CD8-positive, alpha-beta T cell (primary cell): ENCODE measurements at regions of chr16 and their contacts with region 1.

Region 1: GRCh38 chr16:28924732-28925385 is at the start of gene RABEP2:
- DNase-seq: peak; percentile 92 to 99 (median 94)
- ATAC-seq: peak; percentile 77
- H3K4me3 ChIP-seq: peak within 1 kb of the TSS; percentile 96 to 97
- H3K4me3 Mint-ChIP-seq: peak within 1 kb of the TSS; percentile 94
- H3K27ac ChIP-seq: peak within 1 kb of the TSS; percentile 98
- H3K27ac Mint-ChIP-seq: peak within 1 kb of the TSS; percentile 97
- H3K4me1 ChIP-seq: peaks cover 10% of the 10 kb centered on the region
- H3K4me1 Mint-ChIP-seq: peaks cover 25% of the 10 kb centered on the region
- H3K27me3 ChIP-seq: no peaks in the 10 kb centered on the region
- H3K27me3 Mint-ChIP-seq: no peaks in the 10 kb centered on the region
- CTCF ChIP-seq: no peak
- total RNA-seq, gene RABEP2: 26.5 to 29.0 TPM

Region 2: DNA sequence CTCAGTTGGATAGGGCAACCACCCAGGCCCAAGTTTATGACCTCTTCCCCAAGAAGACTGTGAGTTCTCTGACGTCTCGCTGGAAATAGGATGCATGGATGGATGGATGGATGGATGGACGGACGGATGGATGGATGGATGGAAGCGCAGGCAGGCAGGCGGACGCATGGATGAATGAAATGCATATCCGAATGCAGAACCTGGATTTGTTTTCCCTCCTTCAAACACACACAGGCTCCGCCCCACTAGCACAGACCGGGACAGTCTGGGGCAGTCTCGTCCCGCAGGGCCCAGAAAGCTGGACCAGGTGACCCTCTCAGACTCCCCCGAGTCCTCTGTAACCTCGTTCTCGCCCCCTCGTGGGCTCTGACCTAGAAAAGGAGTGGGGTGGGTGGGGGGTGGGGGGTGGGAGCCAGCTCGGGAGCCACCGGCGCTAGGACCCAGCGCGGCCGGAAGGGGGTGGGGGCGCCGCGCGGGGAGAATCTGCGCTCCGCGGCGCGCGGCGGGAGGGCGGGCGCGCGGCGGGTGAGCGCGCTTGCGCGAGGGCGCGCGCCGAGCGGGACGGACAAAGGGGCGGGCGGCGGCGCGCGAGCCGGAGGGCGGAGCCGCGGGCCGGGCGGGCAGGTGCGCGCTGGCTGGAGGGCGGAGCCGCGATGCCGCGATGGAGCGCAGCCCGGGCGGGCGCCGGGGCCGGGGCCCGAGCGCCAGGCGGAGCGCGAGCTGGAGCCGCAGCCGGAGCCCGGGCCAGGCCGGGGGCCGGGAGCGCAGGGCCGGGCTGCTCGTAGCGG is 632.8 kb before region 1 on chr16 and contains the start of gene SBK1:
- CTCF ChIA-PET with region 1: no interaction called
- POLR2A ChIA-PET with region 1: no interaction called
- intact Hi-C with region 1: loop called in 1 of 2 experiments (anchors 5 kb)
- DNase-seq: peak; percentile 68 to 94 (median 84)
- ATAC-seq: peak; percentile 90
- H3K4me3 ChIP-seq: peak within 1 kb of the TSS; percentile 82 to 92
- H3K4me3 Mint-ChIP-seq: peak within 1 kb of the TSS; percentile 94
- H3K27ac ChIP-seq: peak within 1 kb of the TSS; percentile 56 to 75
- H3K27ac Mint-ChIP-seq: peak within 1 kb of the TSS; percentile 93
- H3K4me1 ChIP-seq: peaks cover 74% of the 10 kb centered on the region
- H3K4me1 Mint-ChIP-seq: peaks cover 67% of the 10 kb centered on the region
- H3K27me3 ChIP-seq: no peaks in the 10 kb centered on the region
- H3K27me3 Mint-ChIP-seq: no peaks in the 10 kb centered on the region
- CTCF ChIP-seq: no peak
- total RNA-seq, gene SBK1: 16.5 to 17.1 TPM

Region 3: DNA sequence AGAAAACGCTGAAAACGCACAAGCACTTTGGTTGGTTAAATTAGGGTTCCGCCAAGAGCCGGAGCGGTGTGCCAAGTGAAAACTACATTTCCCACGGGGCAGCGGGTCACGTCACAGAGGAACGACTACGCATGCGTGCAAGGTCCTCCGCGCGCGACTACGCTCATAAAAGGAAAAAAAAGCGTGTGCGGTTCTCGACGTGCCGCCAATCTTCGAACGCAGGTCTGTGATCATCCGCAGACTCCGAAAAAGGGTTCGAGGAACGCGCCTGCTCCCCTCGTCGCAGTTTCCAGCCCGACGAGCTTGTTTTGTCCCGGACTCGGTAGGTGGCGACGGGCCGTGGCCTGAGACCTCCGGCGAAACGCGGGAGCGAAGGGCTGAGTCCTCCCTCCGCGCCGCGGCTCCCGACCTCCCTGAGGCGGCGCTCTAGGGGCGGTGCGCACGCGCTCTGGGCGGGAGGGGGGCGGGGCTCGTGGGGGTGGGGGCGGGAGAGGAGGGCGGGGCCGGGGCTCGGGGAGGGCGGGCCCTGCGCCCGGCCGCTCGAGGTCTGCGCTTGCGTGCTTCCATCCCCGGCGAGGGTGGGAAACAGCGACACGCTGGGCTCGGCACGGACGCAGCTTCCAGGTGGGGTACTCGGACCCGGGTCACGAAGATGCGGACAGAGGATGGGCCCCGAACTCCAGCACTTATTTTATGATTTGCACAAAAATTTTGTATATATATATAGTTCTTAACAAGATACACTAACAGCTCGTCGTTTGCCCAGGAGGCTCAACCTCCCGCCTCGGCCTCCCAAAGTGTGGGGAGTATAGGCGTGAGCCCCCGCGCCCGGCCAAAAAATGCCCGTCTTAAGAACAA is 370.9 kb before region 1 on chr16 and contains the start of gene SGF29:
- CTCF ChIA-PET with region 1: no interaction called
- POLR2A ChIA-PET with region 1: no interaction called
- intact Hi-C with region 1: no loop called
- DNase-seq: peak; percentile 86 to 97 (median 93)
- ATAC-seq: peak; percentile 93
- H3K4me3 ChIP-seq: peak within 1 kb of the TSS; percentile 87 to 99
- H3K4me3 Mint-ChIP-seq: peak within 1 kb of the TSS; percentile 92
- H3K27ac ChIP-seq: peak within 1 kb of the TSS; percentile 95 to 98
- H3K27ac Mint-ChIP-seq: peak within 1 kb of the TSS; percentile 98
- H3K4me1 ChIP-seq: peaks cover 18% of the 10 kb centered on the region
- H3K4me1 Mint-ChIP-seq: peaks cover 36% of the 10 kb centered on the region
- H3K27me3 ChIP-seq: no peaks in the 10 kb centered on the region
- H3K27me3 Mint-ChIP-seq: no peaks in the 10 kb centered on the region
- CTCF ChIP-seq: no peak
- total RNA-seq, gene SGF29: 41.1 to 44.5 TPM

Region 4: DNA sequence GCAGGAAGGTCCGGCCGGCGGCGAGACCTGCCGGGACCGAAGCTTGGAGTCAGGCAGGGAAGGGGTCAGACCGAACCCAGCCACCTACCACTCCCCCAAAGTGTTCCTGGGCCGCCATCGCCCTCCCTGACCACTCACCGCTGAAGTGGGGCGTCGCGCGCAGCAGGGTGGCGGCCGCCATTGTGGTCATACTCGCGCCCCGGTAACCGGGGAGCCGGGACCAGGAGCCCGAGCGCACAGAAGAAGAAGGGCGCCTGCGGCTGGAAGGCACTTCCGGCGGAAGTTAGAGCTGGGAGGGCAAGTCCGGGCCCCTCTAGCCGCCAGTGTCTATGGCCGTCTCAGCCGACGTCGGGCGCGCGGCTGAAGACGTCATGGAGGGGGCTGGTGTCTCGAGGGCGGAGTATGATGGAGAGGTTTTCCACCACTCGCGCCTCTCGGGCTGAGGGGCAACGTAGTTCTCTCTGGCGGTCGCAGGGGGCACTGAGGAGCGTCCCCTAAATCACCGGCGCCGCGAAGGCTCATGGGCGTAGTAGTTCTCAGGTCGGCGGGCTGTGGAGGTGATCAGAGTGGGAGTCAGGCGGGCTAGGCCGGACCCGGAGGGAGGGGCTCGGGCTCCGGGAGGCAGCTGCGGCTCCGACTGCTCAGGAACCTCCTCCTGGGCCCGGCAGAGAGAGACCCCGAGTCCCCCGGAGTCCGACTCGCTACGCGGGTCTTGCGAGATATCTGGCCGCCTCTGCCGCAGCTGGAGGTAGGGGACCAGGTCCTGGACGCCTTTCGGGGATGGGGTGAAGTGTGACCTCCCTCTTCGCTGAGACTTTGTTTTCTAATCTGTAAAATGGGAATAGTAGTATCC is 78.6 kb before region 1 on chr16 and contains the start of gene TUFM:
- CTCF ChIA-PET with region 1: interaction called, 3 read pairs
- POLR2A ChIA-PET with region 1: interaction called, 8 read pairs
- intact Hi-C with region 1: loop called (anchors 1 kb)
- DNase-seq: peak; percentile 96 to 99 (median 98)
- ATAC-seq: peak; percentile 96
- H3K4me3 ChIP-seq: peak within 1 kb of the TSS; percentile 83 to 100
- H3K4me3 Mint-ChIP-seq: peak within 1 kb of the TSS; percentile 91
- H3K27ac ChIP-seq: peak within 1 kb of the TSS; percentile 78 to 93
- H3K27ac Mint-ChIP-seq: peak within 1 kb of the TSS; percentile 94
- H3K4me1 ChIP-seq: peaks cover 23% of the 10 kb centered on the region
- H3K4me1 Mint-ChIP-seq: peaks cover 32% of the 10 kb centered on the region
- H3K27me3 ChIP-seq: no peaks in the 10 kb centered on the region
- H3K27me3 Mint-ChIP-seq: no peaks in the 10 kb centered on the region
- CTCF ChIP-seq: peak; percentile 75
- total RNA-seq, gene TUFM: 111 to 119 TPM

Region 5: DNA sequence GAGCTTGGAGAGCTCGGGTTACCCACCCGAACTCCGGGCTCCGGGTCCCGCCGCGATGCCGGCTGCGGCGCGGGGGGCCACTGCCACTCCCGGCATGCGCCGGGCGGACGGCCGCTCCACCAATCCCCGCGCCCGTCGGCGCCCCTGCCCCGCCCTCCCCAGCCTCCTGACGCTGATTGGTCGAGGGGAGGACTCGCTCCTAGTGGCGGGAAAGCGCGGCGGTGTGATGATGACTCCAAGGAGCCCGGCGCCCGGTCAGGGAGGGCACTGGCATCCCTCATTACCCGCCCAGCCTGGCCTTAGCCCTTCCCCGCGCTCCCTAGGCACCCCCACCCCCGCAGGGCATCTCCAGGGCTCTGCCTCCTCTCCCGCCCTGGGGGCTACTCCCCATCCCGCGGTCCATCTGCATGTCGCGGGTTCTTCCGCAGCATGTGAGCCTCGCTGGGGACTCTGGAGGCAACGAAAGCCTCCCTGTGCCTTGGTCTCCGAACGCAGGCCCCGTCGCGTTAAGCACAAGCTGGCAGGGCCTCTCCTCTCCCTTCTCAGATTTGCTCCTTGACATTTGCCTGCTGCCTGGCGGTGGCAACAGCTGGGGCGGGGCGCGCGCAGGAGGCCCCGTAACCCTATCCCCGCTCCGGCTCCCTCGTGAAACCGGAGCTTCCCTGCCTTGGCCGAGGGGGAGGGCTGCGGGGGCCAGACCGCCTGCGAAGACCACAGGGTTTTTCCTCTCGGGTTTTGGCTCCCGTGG is 44.8 kb before region 1 on chr16:
- CTCF ChIA-PET with region 1: no interaction called
- POLR2A ChIA-PET with region 1: interaction called, 3 read pairs
- intact Hi-C with region 1: loop called (anchors 1 to 5 kb)
- DNase-seq: peak; percentile 78 to 91 (median 89)
- ATAC-seq: peak; percentile 97
- H3K4me3 ChIP-seq: peak overlapping the region; percentile 85 to 88
- H3K4me3 Mint-ChIP-seq: peak overlapping the region; percentile 86
- H3K27ac ChIP-seq: peak overlapping the region in 1 of 2 experiments; percentile 39
- H3K27ac Mint-ChIP-seq: no peak overlapping the region
- H3K4me1 ChIP-seq: peaks cover 9% of the 10 kb centered on the region
- H3K4me1 Mint-ChIP-seq: peaks cover 16% of the 10 kb centered on the region
- H3K27me3 ChIP-seq: no peaks in the 10 kb centered on the region
- H3K27me3 Mint-ChIP-seq: peaks cover 14% of the 10 kb centered on the region
- CTCF ChIP-seq: no peak

Region 6: DNA sequence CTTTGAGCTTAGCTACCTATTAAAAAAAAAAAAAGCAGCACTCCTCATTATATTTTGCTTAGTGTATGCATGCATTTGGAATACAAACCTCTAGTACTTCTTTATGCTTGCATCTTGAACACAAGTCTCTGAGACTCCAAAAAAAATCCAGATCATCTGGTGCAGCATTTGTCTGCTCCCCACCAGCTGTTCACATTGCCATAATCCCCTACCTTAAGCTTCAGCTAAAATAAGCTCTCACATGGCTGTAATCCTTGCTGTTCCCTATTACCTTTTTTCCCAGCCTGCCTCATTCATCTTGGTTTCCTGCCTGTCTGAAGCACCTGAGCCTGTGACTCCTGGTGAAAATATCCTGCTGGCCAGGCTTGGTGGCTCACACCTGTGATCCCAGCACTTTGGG is 18.4 kb after region 1 on chr16:
- CTCF ChIA-PET with region 1: interaction called, 21 read pairs
- POLR2A ChIA-PET with region 1: interaction called, 18 read pairs
- intact Hi-C with region 1: loop called in 1 of 2 experiments (anchors 2 kb)
- DNase-seq: no peak
- ATAC-seq: no peak
- H3K4me3 ChIP-seq: no peak overlapping the region
- H3K4me3 Mint-ChIP-seq: no peak overlapping the region
- H3K27ac ChIP-seq: no peak overlapping the region
- H3K27ac Mint-ChIP-seq: no peak overlapping the region
- H3K4me1 ChIP-seq: peaks cover 6% of the 10 kb centered on the region
- H3K4me1 Mint-ChIP-seq: peaks cover 7% of the 10 kb centered on the region
- H3K27me3 ChIP-seq: no peaks in the 10 kb centered on the region
- H3K27me3 Mint-ChIP-seq: no peaks in the 10 kb centered on the region
- CTCF ChIP-seq: no peak

Region 7: GRCh38 chr16:28958836-28959235 is 34.0 kb after region 1 on chr16:
- CTCF ChIA-PET with region 1: no interaction called
- POLR2A ChIA-PET with region 1: no interaction called
- intact Hi-C with region 1: no loop called
- DNase-seq: no peak
- ATAC-seq: no peak
- H3K4me3 ChIP-seq: no peak overlapping the region
- H3K4me3 Mint-ChIP-seq: no peak overlapping the region
- H3K27ac ChIP-seq: no peak overlapping the region
- H3K27ac Mint-ChIP-seq: no peak overlapping the region
- H3K4me1 ChIP-seq: no peaks in the 10 kb centered on the region
- H3K4me1 Mint-ChIP-seq: peaks cover 6% of the 10 kb centered on the region
- H3K27me3 ChIP-seq: no peaks in the 10 kb centered on the region
- H3K27me3 Mint-ChIP-seq: no peaks in the 10 kb centered on the region
- CTCF ChIP-seq: no peak